ENCODE measurements at regions of chr2 and their contacts with region 1.

Region 1: GRCh38 chr2:86623651-86624541 is at the start of gene RNF103:
- DNase-seq: peak; percentile 93 to 94
- ATAC-seq: peak; percentile 84 to 86
- H3K4me3 ChIP-seq: peak within 1 kb of the TSS; percentile 69 to 83 (median 76)
- H3K27ac ChIP-seq: peak within 1 kb of the TSS; percentile 96 to 98 (median 96)
- H3K4me1 ChIP-seq: peaks cover 26 to 38% of the 10 kb centered on the region in 2 donors
- H3K27me3 ChIP-seq: no peaks in the 10 kb centered on the region
- CTCF ChIP-seq: no peak
- POLR2A ChIP-seq: peak; percentile 98 to 100
- total RNA-seq, gene RNF103: 21.8 to 31.1 (median 23.8) TPM

Region 2: GRCh38 chr2:85619617-85620016 is 1004.3 kb before region 1 on chr2:
- in situ Hi-C with region 1: no loop called
- intact Hi-C with region 1: loop called (anchors 5 kb)
- DNase-seq: no peak
- ATAC-seq: no peak
- H3K4me3 ChIP-seq: no peak overlapping the region
- H3K27ac ChIP-seq: peak overlapping the region in 1 of 4 donors; percentile 36
- H3K4me1 ChIP-seq: peaks cover 26 to 33% of the 10 kb centered on the region in 2 donors
- H3K27me3 ChIP-seq: no peaks in the 10 kb centered on the region
- CTCF ChIP-seq: no peak
- POLR2A ChIP-seq: no peak

Region 3: GRCh38 chr2:86221066-86221684 is 402.7 kb before region 1 on chr2:
- in situ Hi-C with region 1: loop called in 1 of 4 experiments (anchors 25 kb)
- intact Hi-C with region 1: loop called (anchors 10 kb)
- DNase-seq: no peak
- ATAC-seq: peak; percentile 14 to 61
- H3K4me3 ChIP-seq: no peak overlapping the region
- H3K27ac ChIP-seq: peak overlapping the region in 1 of 4 donors; percentile 5
- H3K4me1 ChIP-seq: peaks cover 36 to 45% of the 10 kb centered on the region in 2 donors
- H3K27me3 ChIP-seq: no peaks in the 10 kb centered on the region
- CTCF ChIP-seq: peak; percentile 72 to 95 (median 89)
- POLR2A ChIP-seq: no peak

Region 4: DNA sequence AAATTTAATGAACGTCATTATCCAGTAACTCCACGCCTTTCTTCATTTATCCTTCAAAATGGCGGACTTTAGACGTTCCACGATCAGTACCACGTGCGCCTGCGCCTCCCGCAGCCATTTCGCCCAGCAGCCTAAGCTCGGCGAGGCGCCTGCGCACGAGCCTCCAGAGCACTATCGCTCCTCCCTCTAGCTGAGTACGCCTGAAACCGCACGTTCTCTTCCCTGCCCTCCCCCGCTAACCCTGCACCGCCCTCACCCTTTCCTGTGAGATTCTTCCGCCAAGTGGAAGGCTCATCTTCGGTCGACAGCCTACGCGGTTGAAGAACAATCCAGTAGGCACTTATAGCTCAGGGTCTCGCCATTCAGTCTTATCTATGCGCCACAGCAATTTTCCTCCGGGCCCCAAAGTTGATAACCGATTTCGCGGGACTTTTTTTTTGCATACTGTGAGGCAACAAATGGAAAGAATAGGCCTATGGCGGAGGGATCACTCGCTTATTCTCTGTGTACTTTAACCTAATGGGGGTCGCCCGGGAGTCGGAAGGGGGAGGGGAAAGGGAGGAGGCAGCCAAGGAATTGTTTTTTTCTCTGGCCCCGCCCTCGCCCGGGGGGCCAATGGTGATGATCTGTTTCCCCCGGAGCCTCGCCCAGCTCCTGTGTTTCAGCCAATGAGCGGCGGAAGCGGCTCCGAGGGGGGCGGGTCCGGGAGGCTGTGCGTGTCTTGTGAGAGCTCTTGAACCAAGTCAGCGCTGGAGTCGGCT is 183.1 kb before region 1 on chr2 and contains the start of gene KDM3A:
- in situ Hi-C with region 1: no loop called
- intact Hi-C with region 1: loop called (anchors 1 kb)
- DNase-seq: peak; percentile 99
- ATAC-seq: peak; percentile 84 to 86
- H3K4me3 ChIP-seq: peak within 1 kb of the TSS; percentile 74 to 81 (median 76)
- H3K27ac ChIP-seq: peak within 1 kb of the TSS; percentile 86 to 98 (median 91)
- H3K4me1 ChIP-seq: peaks cover 31 to 33% of the 10 kb centered on the region in 2 donors
- H3K27me3 ChIP-seq: no peaks in the 10 kb centered on the region
- CTCF ChIP-seq: peak in 1 of 5 experiments; percentile 5
- POLR2A ChIP-seq: no peak
- total RNA-seq, gene KDM3A: 20.7 to 36.8 (median 26.1) TPM

Region 5: GRCh38 chr2:86512034-86512433 is 111.9 kb before region 1 on chr2:
- in situ Hi-C with region 1: no loop called
- intact Hi-C with region 1: loop called (anchors 5 kb)
- DNase-seq: no peak
- ATAC-seq: no peak
- H3K4me3 ChIP-seq: no peak overlapping the region
- H3K27ac ChIP-seq: peak overlapping the region; percentile 33 to 80 (median 76)
- H3K4me1 ChIP-seq: peaks cover 58 to 60% of the 10 kb centered on the region in 2 donors
- H3K27me3 ChIP-seq: no peaks in the 10 kb centered on the region
- CTCF ChIP-seq: no peak
- POLR2A ChIP-seq: no peak

Region 6: GRCh38 chr2:86533589-86533988 is 90.3 kb before region 1 on chr2:
- in situ Hi-C with region 1: no loop called
- intact Hi-C with region 1: no loop called
- DNase-seq: no peak
- ATAC-seq: no peak
- H3K4me3 ChIP-seq: no peak overlapping the region
- H3K27ac ChIP-seq: no peak overlapping the region
- H3K4me1 ChIP-seq: no peaks in the 10 kb centered on the region
- H3K27me3 ChIP-seq: no peaks in the 10 kb centered on the region
- CTCF ChIP-seq: no peak
- POLR2A ChIP-seq: no peak

Region 7: GRCh38 chr2:86562922-86563649 is 60.8 kb before region 1 on chr2 and contains the start of gene CHMP3:
- in situ Hi-C with region 1: no loop called
- intact Hi-C with region 1: loop called (anchors 1 kb)
- DNase-seq: peak; percentile 92 to 95
- ATAC-seq: peak; percentile 95
- H3K4me3 ChIP-seq: peak within 1 kb of the TSS; percentile 81 to 90 (median 86)
- H3K27ac ChIP-seq: peak within 1 kb of the TSS; percentile 97 to 99 (median 99)
- H3K4me1 ChIP-seq: peaks cover 18 to 23% of the 10 kb centered on the region in 2 donors
- H3K27me3 ChIP-seq: no peaks in the 10 kb centered on the region
- CTCF ChIP-seq: peak in 1 of 5 experiments; percentile 19
- POLR2A ChIP-seq: peak; percentile 72 to 75
- total RNA-seq, gene CHMP3: 64.0 to 99.1 (median 71.5) TPM

Region 8: GRCh38 chr2:86704459-86704971 is 80.6 kb after region 1 on chr2:
- in situ Hi-C with region 1: loop called in 1 of 4 experiments (anchors 10 kb)
- intact Hi-C with region 1: loop called (anchors 5 kb)
- DNase-seq: peak; percentile 42 to 67
- ATAC-seq: peak; percentile 91 to 95
- H3K4me3 ChIP-seq: peak overlapping the region in 2 of 4 donors; percentile 20 to 33
- H3K27ac ChIP-seq: peak overlapping the region; percentile 79 to 90 (median 86)
- H3K4me1 ChIP-seq: peaks cover 16 to 20% of the 10 kb centered on the region in 2 donors
- H3K27me3 ChIP-seq: no peaks in the 10 kb centered on the region
- CTCF ChIP-seq: no peak
- POLR2A ChIP-seq: no peak

Measured in gastrocnemius medialis (tissue), 4 donors.